ENCODE measurements at regions of chr2 and their contacts with region 1.

Region 1: DNA sequence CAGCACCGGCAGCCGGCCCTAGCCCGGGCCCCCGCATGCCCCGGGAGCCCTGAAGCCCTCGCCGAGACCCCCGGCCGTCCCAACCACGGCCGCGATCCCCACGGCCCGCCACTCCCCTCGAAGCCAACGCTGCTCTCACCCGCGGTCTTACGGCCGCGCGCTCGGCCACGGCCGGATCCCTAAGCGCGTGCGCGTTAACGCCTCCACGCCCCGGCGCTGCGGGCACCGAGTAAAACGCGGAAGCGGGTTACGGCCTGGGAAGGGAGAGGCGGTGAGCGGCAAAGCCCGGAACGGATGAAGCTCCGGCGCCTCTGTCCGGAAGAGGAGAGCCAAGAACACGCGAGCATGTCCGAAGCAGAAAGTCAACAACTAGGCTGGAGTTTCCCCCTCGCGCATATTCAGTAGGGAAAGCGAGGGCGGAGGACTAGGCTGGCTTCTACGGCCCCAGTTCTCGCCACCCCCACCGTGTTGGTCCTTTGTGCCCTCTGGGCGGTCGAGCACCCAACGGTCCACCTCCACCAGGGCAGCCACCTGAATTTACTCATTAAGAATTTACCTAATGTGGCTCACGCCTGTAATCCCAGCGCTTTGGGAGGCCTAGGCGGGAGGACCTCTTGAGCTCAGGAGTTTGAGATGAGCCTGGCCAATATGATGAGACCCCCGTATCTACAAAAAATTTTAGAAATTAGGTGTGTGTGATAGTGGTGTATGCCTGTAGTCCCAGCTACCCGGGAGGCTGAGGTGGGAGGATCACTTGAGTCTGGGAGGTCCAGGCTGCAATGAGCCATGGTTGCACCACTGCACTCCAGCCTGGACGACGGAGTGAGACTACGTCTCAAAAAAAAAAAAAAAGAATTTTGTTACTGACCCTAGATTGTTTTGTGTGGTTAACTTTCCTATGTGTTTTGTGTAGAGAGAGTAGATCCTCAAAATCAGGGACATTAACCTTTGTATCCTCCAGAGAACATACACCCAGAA is at the start of gene KANSL3:
- DNase-seq: peak; percentile 86 to 93 (median 89)
- H3K4me3 ChIP-seq: peak within 1 kb of the TSS; percentile 79 to 92
- H3K4me3 Mint-ChIP-seq: peak within 1 kb of the TSS; percentile 94 to 100 (median 96)
- H3K27ac ChIP-seq: peak within 1 kb of the TSS; percentile 77
- H3K27ac Mint-ChIP-seq: peak within 1 kb of the TSS; percentile 95 to 99 (median 97)
- H3K4me1 ChIP-seq: peaks cover 39% of the 10 kb centered on the region
- H3K4me1 Mint-ChIP-seq: peaks cover 26 to 42% (median 35%) of the 10 kb centered on the region in 4 donors
- H3K27me3 ChIP-seq: no peaks in the 10 kb centered on the region
- H3K27me3 Mint-ChIP-seq: peaks cover 0 to 2% of the 10 kb centered on the region in 2 donors
- total RNA-seq, gene KANSL3: 63.3 to 69.7 TPM

Region 2: DNA sequence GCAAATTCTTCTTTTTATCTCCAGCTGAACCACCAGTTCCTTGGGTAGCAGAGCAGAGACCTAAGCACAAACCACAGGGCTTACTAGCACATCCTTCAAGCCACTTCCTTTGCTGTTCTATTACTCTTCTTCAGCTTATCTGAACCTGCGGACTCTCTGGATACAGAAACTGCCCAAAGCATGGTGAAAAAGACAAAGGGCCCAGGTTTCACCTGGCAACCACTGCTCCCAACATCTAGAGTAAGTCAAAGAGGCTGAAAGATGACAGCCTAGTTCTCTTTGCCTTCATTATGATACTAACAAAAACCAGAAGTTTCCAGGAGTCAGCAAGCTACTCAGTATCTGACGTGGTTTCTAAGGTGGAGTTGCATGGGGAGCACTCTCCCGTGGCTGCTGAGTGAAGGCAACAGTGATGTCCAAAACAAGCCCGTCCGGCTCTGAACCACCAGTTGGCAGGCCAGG is 43.7 kb before region 1 on chr2:
- CTCF ChIA-PET with region 1: no interaction called
- POLR2A ChIA-PET with region 1: interaction called, 12 read pairs
- intact Hi-C with region 1: no loop called
- DNase-seq: peak in 4 of 5 donors; percentile 42 to 55 (median 50)
- H3K4me3 ChIP-seq: no peak overlapping the region
- H3K4me3 Mint-ChIP-seq: peak overlapping the region in 7 of 8 donors; percentile 35 to 79 (median 62)
- H3K27ac ChIP-seq: peak overlapping the region; percentile 10
- H3K27ac Mint-ChIP-seq: peak overlapping the region; percentile 78 to 93 (median 88)
- H3K4me1 ChIP-seq: peaks cover 40% of the 10 kb centered on the region
- H3K4me1 Mint-ChIP-seq: peaks cover 35 to 46% (median 39%) of the 10 kb centered on the region in 4 donors
- H3K27me3 ChIP-seq: no peaks in the 10 kb centered on the region
- H3K27me3 Mint-ChIP-seq: no peaks in the 10 kb centered on the region

Region 3: GRCh38 chr2:96739633-96740428 is 101.4 kb after region 1 on chr2 and contains the start of gene LMAN2L:
- CTCF ChIA-PET with region 1: no interaction called
- POLR2A ChIA-PET with region 1: interaction called, 3 read pairs
- intact Hi-C with region 1: loop called (anchors 1 kb)
- DNase-seq: peak; percentile 94 to 99 (median 98)
- H3K4me3 ChIP-seq: peak within 1 kb of the TSS; percentile 63 to 82
- H3K4me3 Mint-ChIP-seq: peak within 1 kb of the TSS; percentile 93 to 100 (median 98)
- H3K27ac ChIP-seq: peak within 1 kb of the TSS; percentile 75
- H3K27ac Mint-ChIP-seq: peak within 1 kb of the TSS; percentile 90 to 98 (median 97)
- H3K4me1 ChIP-seq: peaks cover 36% of the 10 kb centered on the region
- H3K4me1 Mint-ChIP-seq: peaks cover 24 to 53% (median 39%) of the 10 kb centered on the region in 4 donors
- H3K27me3 ChIP-seq: no peaks in the 10 kb centered on the region
- H3K27me3 Mint-ChIP-seq: no peaks in the 10 kb centered on the region
- total RNA-seq, gene LMAN2L: 10.1 to 12.6 TPM

Region 4: DNA sequence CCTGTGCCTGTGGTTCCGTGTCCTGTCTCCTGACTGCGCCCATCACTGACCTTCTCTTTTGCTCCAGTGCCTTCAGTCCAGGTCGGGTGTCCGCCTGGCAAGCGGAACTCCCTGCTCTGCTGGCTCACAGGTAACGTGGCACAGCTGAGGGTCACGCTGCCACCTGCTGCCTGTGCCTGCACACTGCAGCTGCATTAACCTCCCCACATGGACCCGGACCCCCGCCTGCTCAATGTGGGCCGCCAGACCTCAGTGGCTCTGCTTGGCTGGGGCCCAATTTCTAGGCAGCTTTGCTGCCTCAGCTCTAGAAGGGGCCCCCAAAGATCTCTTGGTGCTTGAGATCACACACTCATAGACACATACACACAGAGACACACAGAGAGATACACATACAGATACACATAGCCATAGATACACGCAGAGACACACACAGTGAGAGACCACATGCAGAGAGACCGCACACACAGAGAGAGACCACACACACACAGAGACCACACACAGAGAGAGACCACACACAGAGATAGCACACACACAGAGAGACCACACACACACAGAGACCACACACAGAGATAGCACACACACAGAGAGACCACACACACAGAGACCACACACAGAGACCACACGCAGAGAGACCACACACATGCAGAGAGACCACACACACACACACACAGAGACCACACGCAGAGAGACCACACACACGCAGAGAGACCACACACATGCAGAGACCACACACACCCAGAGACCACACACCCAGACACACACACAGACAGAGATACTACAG is 162.8 kb after region 1 on chr2:
- CTCF ChIA-PET with region 1: no interaction called
- POLR2A ChIA-PET with region 1: interaction called, 4 read pairs
- intact Hi-C with region 1: loop called (anchors 1 kb)
- DNase-seq: peak; percentile 65 to 70 (median 65)
- H3K4me3 ChIP-seq: no peak overlapping the region
- H3K4me3 Mint-ChIP-seq: no peak overlapping the region
- H3K27ac ChIP-seq: no peak overlapping the region
- H3K27ac Mint-ChIP-seq: no peak overlapping the region
- H3K4me1 ChIP-seq: peaks cover 28% of the 10 kb centered on the region
- H3K4me1 Mint-ChIP-seq: peaks cover 3 to 7% (median 5%) of the 10 kb centered on the region in 4 donors
- H3K27me3 ChIP-seq: no peaks in the 10 kb centered on the region
- H3K27me3 Mint-ChIP-seq: no peaks in the 10 kb centered on the region

Region 5: DNA sequence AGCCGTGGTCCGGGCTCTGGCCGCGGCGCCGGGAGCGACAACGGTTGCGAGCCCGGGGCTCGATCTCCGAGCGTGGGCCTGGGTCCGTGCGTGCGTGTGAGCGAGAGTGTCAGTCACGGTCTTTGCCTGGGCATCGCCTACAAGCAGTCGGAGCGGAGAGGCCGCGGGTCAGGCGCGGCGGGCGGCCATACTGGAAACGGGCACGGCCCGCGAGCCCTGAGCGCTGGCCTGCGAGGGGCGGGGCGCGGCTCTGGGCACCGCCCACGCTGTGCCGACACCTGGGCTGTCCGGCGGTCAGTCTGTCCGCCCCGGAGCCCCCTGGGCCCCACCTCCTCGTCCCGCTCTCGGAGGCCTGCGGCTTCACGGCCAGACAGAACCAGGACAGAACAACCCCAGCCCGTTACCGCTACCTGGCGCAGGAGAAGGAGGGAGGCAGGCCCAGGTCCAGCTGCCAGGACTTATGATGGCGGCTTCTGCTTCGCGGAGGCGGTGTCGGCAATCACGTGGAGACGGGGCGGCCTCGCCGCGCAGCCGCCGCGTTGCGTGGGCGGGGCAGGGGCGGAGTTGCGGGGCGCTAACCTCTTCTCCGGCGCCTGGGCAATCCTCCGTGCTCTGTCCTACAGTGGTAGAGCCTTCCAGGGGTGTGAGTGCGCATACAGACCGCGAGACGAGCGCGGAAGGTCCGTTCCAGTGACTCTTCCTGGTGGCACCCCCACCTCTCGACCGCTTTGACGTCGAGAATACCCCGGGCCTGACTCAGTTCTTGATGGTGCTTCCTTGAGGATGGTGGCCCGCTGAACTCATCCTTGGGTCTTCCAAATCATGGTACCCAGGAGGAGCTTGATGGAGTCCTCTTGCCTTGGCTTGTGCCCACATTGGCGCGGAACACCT is 1357.5 kb after region 1 on chr2 and contains the start of gene TMEM131:
- CTCF ChIA-PET with region 1: no interaction called
- POLR2A ChIA-PET with region 1: no interaction called
- intact Hi-C with region 1: loop called (anchors 5 kb)
- DNase-seq: peak; percentile 93 to 97 (median 95)
- H3K4me3 ChIP-seq: peak within 1 kb of the TSS; percentile 69 to 95
- H3K4me3 Mint-ChIP-seq: peak within 1 kb of the TSS; percentile 90 to 100 (median 97)
- H3K27ac ChIP-seq: peak within 1 kb of the TSS; percentile 89
- H3K27ac Mint-ChIP-seq: peak within 1 kb of the TSS; percentile 84 to 98 (median 94)
- H3K4me1 ChIP-seq: peaks cover 37% of the 10 kb centered on the region
- H3K4me1 Mint-ChIP-seq: peaks cover 28 to 47% (median 36%) of the 10 kb centered on the region in 4 donors
- H3K27me3 ChIP-seq: no peaks in the 10 kb centered on the region
- H3K27me3 Mint-ChIP-seq: peaks cover 0 to 2% of the 10 kb centered on the region in 2 donors
- total RNA-seq, gene TMEM131: 47.5 to 47.6 TPM